Left lung (tissue), 14 donors: ENCODE measurements at regions of chr6 and their contacts with region 1.

Region 1: DNA sequence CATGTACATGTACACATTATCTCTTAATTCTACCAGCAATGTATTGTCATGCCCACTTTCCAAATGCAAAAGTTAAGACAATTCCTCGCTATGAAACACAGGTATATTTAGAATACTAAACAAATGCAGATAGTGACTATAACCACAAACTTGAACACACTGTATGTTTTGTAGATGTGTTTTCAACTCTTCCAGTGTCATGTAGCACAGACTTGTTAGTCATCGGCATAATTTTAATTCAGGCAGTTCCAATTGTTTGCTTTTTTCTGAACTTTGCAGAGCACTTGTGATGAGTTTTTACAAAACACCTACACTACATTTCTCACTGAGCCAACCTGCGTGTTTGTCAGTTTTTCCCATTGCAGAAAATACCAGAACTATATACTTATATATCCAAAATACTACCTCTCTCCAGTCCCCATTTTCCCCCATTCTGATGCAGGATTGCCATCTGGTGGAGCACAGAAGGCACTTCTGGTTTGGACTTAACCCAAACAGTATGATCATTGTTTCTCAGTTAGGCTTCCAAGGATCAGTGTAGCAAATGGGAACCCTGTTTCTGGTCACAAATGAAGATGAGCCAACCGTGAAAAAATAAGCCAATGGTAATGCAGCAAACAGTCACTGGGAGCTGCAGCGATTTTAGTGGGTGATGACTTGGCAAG is 143.4 kb downstream of the ADGRB3 start:
- DNase-seq: peak in 2 of 4 donors; percentile 68 to 83
- ATAC-seq: peak; percentile 77
- H3K4me3 ChIP-seq: no peak overlapping the region
- H3K27ac ChIP-seq: no peak overlapping the region
- H3K4me1 ChIP-seq: no peaks in the 10 kb centered on the region
- H3K27me3 ChIP-seq: no peaks in the 10 kb centered on the region
- CTCF ChIP-seq: peak; percentile 32 to 51

Region 2: GRCh38 chr6:68634726-68635411 is 143.6 kb before region 1 on chr6 and contains the start of gene ADGRB3:
- intact Hi-C with region 1: loop called in 1 of 2 experiments (anchors 5 kb)
- DNase-seq: peak; percentile 78 to 96 (median 90)
- ATAC-seq: peak; percentile 95
- H3K4me3 ChIP-seq: peak within 1 kb of the TSS; percentile 47 to 57
- H3K27ac ChIP-seq: peak within 1 kb of the TSS; percentile 64 to 72
- H3K4me1 ChIP-seq: peaks cover 0 to 21% of the 10 kb centered on the region in 2 donors
- H3K27me3 ChIP-seq: peaks cover 15 to 61% of the 10 kb centered on the region in 2 donors
- CTCF ChIP-seq: no peak
- polyA plus RNA-seq, gene ADGRB3: 10.7 to 22.4 (median 14.8) TPM